ENCODE measurements at regions of chr3 and their contacts with region 1.

Region 1: GRCh38 chr3:120742198-120742849 is at the starts of genes GTF2E1 and RABL3:
- DNase-seq: peak; percentile 100
- H3K4me3 ChIP-seq: peak within 1 kb of the TSS; percentile 72 to 83
- H3K27ac ChIP-seq: peak within 1 kb of the TSS; percentile 94
- H3K4me1 ChIP-seq: peaks cover 12% of the 10 kb centered on the region
- H3K27me3 ChIP-seq: no peaks in the 10 kb centered on the region
- CTCF ChIP-seq: no peak
- POLR2A ChIP-seq: peak in 1 of 2 donors; percentile 41
- total RNA-seq, gene GTF2E1: 9.1 TPM
- total RNA-seq, gene RABL3: 12.8 TPM

Region 2: GRCh38 chr3:120095226-120095978 is 646.9 kb before region 1 on chr3:
- intact Hi-C with region 1: loop called (anchors 10 kb)
- DNase-seq: peak in 1 of 2 donors; percentile 96
- H3K4me3 ChIP-seq: peak overlapping the region; percentile 54 to 90
- H3K27ac ChIP-seq: peak overlapping the region; percentile 99
- H3K4me1 ChIP-seq: peaks cover 44% of the 10 kb centered on the region
- H3K27me3 ChIP-seq: no peaks in the 10 kb centered on the region
- CTCF ChIP-seq: no peak
- POLR2A ChIP-seq: peak in 1 of 2 donors; percentile 90

Region 3: GRCh38 chr3:120596116-120596852 is 146.0 kb before region 1 on chr3 and contains the start of gene NDUFB4:
- intact Hi-C with region 1: loop called (anchors 10 kb)
- DNase-seq: peak; percentile 97 to 98
- H3K4me3 ChIP-seq: peak within 1 kb of the TSS; percentile 79 to 83
- H3K27ac ChIP-seq: peak within 1 kb of the TSS; percentile 97
- H3K4me1 ChIP-seq: peaks cover 38% of the 10 kb centered on the region
- H3K27me3 ChIP-seq: no peaks in the 10 kb centered on the region
- CTCF ChIP-seq: no peak
- POLR2A ChIP-seq: peak in 1 of 2 donors; percentile 64
- total RNA-seq, gene NDUFB4: 82.5 TPM

Measured in vagina (tissue), 2 donors.